GM12878 (cell line): ENCODE measurements at regions of chr3 and their contacts with region 1.

Region 1: GRCh38 chr3:124761250-124761796 is 31.1 kb downstream of the UMPS start:
- DNase-seq: peak; percentile 49
- ATAC-seq: peak; percentile 91
- H3K4me3 ChIP-seq: no peak overlapping the region
- H3K27ac ChIP-seq: no peak overlapping the region
- H3K4me1 ChIP-seq: no peaks in the 10 kb centered on the region
- H3K27me3 ChIP-seq: no peaks in the 10 kb centered on the region; a peak in 2 of 4 replicates
- CTCF ChIP-seq: peak; percentile 94 to 96 (median 94)
- EP300 ChIP-seq: no peak
- POLR2A ChIP-seq: no peak
- RAD21 ChIP-seq: peak; percentile 93

Region 2: DNA sequence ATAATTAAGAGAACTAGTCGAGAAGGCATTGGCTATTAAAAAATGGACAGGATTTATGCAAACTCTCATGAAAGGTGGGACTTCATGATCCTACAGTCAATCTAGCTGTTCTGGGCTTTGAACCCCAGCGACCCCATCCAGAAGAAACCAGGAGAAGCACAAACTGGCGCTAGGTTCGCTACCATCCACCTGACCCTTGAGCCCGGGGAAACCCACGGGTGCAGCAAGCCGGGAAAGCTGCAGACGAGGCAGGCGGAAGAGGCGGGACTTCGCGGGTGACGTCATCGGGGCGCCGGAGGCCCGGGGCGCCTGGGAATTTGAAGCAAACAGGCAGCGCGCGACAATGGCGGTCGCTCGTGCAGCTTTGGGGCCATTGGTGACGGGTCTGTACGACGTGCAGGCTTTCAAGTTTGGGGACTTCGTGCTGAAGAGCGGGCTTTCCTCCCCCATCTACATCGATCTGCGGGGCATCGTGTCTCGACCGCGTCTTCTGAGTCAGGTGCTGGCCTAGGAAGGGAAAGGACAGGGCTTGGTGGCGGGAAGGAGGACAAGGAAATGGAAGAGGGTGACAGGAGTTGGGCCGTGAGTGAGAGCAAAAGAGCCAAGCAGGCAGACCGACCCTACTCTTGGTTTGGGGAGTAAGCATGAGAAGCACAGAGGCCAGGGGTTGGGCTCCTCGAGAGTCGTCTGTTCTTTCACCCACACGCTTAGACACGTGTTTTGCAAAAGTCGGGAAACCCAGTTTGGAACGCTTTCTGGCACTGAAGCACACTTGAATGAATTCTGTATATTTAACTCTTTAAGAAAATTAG is 31.0 kb before region 1 on chr3 and contains the start of gene UMPS:
- CTCF ChIA-PET with region 1: interaction called, 13 read pairs
- POLR2A ChIA-PET with region 1: no interaction called
- RAD21 ChIA-PET with region 1: interaction called, 4 read pairs
- SMC1A ChIA-PET with region 1: interaction called, 5 read pairs
- in situ Hi-C with region 1: no loop called
- intact Hi-C with region 1: no loop called
- DNase-seq: peak; percentile 51
- ATAC-seq: peak; percentile 97
- H3K4me3 ChIP-seq: peak within 1 kb of the TSS; percentile 93
- H3K27ac ChIP-seq: peak within 1 kb of the TSS; percentile 87
- H3K4me1 ChIP-seq: no peaks in the 10 kb centered on the region
- H3K27me3 ChIP-seq: no peaks in the 10 kb centered on the region
- CTCF ChIP-seq: no peak
- EP300 ChIP-seq: 0 out of 4 replicates have a peak, but pooled peaks of 1 of the 2 experiments have one; percentile 13
- POLR2A ChIP-seq: peak; percentile 99
- RAD21 ChIP-seq: no peak
- polyA plus RNA-seq, gene UMPS: 52.1 to 69.2 TPM

Region 3: GRCh38 chr3:124786441-124787241 is 25.3 kb after region 1 on chr3:
- CTCF ChIA-PET with region 1: interaction called, 59 read pairs
- POLR2A ChIA-PET with region 1: no interaction called
- RAD21 ChIA-PET with region 1: interaction called, 12 read pairs
- SMC1A ChIA-PET with region 1: interaction called, 22 read pairs
- in situ Hi-C with region 1: no loop called
- intact Hi-C with region 1: no loop called
- DNase-seq: no peak
- ATAC-seq: no peak
- H3K4me3 ChIP-seq: no peak overlapping the region
- H3K27ac ChIP-seq: no peak overlapping the region
- H3K4me1 ChIP-seq: peaks cover 15% of the 10 kb centered on the region
- H3K27me3 ChIP-seq: no peaks in the 10 kb centered on the region
- CTCF ChIP-seq: peak in 1 of 3 experiments; percentile 18; a peak in 1 of 6 replicates
- EP300 ChIP-seq: no peak
- POLR2A ChIP-seq: no peak
- RAD21 ChIP-seq: no peak

Region 4: GRCh38 chr3:124862006-124862405 is 100.7 kb after region 1 on chr3:
- CTCF ChIA-PET with region 1: interaction called, 16 read pairs
- POLR2A ChIA-PET with region 1: no interaction called
- RAD21 ChIA-PET with region 1: interaction called, 4 read pairs
- SMC1A ChIA-PET with region 1: interaction called, 5 read pairs
- in situ Hi-C with region 1: no loop called
- intact Hi-C with region 1: no loop called
- DNase-seq: no peak
- ATAC-seq: peak; percentile 36; the same call in 2 of the 3 replicates
- H3K4me3 ChIP-seq: no peak overlapping the region
- H3K27ac ChIP-seq: no peak overlapping the region
- H3K4me1 ChIP-seq: no peaks in the 10 kb centered on the region
- H3K27me3 ChIP-seq: peaks cover 0 to 2% of the 10 kb centered on the region in 2 experiments; a peak in 3 of 4 replicates
- CTCF ChIP-seq: no peak
- EP300 ChIP-seq: no peak
- POLR2A ChIP-seq: no peak
- RAD21 ChIP-seq: no peak

Region 5: GRCh38 chr3:124895756-124896155 is 134.4 kb after region 1 on chr3:
- CTCF ChIA-PET with region 1: interaction called, 551 read pairs
- POLR2A ChIA-PET with region 1: interaction called, 4 read pairs
- RAD21 ChIA-PET with region 1: interaction called, 174 read pairs
- SMC1A ChIA-PET with region 1: interaction called, 242 read pairs
- in situ Hi-C with region 1: loop called (anchors 5 kb)
- intact Hi-C with region 1: no loop called
- DNase-seq: no peak
- ATAC-seq: no peak
- H3K4me3 ChIP-seq: no peak overlapping the region
- H3K27ac ChIP-seq: no peak overlapping the region
- H3K4me1 ChIP-seq: no peaks in the 10 kb centered on the region; the same call in 1 of the 2 replicates
- H3K27me3 ChIP-seq: no peaks in the 10 kb centered on the region
- CTCF ChIP-seq: no peak
- EP300 ChIP-seq: no peak
- POLR2A ChIP-seq: no peak
- RAD21 ChIP-seq: no peak

Region 6: DNA sequence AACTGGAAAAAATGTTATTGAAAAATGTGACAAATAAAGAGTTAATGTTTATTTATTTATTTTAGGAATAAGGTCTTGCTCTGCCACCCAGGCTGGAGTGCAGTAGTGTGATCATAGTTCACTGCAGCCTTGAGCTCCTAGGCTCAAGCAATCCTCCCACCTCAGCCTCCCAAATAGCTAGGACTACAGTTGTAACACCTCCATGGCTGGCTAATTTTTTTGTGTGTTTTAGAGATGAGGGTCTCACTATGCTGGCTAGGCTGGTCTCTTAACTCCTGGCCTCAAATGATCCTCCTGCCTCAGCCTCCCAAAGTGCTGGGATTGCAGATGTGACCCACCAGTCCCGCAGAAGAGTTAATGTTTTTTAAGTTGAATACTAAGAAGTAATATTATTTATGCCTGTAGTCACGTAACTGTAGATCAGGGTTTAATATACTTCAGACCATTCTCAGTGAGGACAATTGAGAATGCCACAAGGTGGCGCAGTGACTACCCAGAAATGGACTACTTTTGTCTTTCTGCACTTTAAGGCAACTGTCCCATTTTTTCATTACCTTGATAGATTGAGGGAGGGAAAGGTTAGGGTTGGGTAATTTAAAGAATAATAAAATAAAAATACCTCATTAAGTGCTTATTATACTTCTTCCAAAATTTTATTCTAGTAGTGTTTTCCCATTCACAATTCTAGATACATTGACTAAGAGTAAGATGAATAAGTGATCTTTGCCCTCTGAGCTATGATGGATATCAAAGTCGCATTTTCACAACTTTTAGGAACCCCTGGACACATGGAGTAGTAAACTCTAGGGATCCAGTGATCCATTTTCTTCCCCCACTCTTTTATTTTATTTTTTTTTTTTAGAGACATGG is 167.2 kb after region 1 on chr3:
- CTCF ChIA-PET with region 1: interaction called, 23 read pairs
- POLR2A ChIA-PET with region 1: no interaction called
- RAD21 ChIA-PET with region 1: interaction called, 15 read pairs
- SMC1A ChIA-PET with region 1: interaction called, 9 read pairs
- in situ Hi-C with region 1: no loop called
- intact Hi-C with region 1: no loop called
- DNase-seq: no peak
- ATAC-seq: peak; percentile 80
- H3K4me3 ChIP-seq: no peak overlapping the region
- H3K27ac ChIP-seq: no peak overlapping the region
- H3K4me1 ChIP-seq: peaks cover 15% of the 10 kb centered on the region; the same call in 1 of the 2 replicates
- H3K27me3 ChIP-seq: no peaks in the 10 kb centered on the region
- CTCF ChIP-seq: peak; percentile 63 to 75 (median 64); a peak in 5 of 6 replicates
- EP300 ChIP-seq: no peak
- POLR2A ChIP-seq: no peak
- RAD21 ChIP-seq: peak; percentile 74

Region 7: GRCh38 chr3:125202197-125202596 is 440.9 kb after region 1 on chr3:
- CTCF ChIA-PET with region 1: interaction called, 7 read pairs
- POLR2A ChIA-PET with region 1: no interaction called
- RAD21 ChIA-PET with region 1: interaction called, 3 read pairs
- SMC1A ChIA-PET with region 1: no interaction called
- in situ Hi-C with region 1: no loop called
- intact Hi-C with region 1: loop called (anchors 5 kb)
- DNase-seq: no peak
- ATAC-seq: peak; percentile 66
- H3K4me3 ChIP-seq: no peak overlapping the region
- H3K27ac ChIP-seq: no peak overlapping the region
- H3K4me1 ChIP-seq: peaks cover 15% of the 10 kb centered on the region
- H3K27me3 ChIP-seq: no peaks in the 10 kb centered on the region
- CTCF ChIP-seq: peak; percentile 30 to 49 (median 39); a peak in 4 of 6 replicates
- EP300 ChIP-seq: no peak
- POLR2A ChIP-seq: no peak
- RAD21 ChIP-seq: peak; percentile 72